Sigmoid colon (tissue), 7 donors: ENCODE measurements at regions of chr4 and their contacts with region 1.

Region 1: DNA sequence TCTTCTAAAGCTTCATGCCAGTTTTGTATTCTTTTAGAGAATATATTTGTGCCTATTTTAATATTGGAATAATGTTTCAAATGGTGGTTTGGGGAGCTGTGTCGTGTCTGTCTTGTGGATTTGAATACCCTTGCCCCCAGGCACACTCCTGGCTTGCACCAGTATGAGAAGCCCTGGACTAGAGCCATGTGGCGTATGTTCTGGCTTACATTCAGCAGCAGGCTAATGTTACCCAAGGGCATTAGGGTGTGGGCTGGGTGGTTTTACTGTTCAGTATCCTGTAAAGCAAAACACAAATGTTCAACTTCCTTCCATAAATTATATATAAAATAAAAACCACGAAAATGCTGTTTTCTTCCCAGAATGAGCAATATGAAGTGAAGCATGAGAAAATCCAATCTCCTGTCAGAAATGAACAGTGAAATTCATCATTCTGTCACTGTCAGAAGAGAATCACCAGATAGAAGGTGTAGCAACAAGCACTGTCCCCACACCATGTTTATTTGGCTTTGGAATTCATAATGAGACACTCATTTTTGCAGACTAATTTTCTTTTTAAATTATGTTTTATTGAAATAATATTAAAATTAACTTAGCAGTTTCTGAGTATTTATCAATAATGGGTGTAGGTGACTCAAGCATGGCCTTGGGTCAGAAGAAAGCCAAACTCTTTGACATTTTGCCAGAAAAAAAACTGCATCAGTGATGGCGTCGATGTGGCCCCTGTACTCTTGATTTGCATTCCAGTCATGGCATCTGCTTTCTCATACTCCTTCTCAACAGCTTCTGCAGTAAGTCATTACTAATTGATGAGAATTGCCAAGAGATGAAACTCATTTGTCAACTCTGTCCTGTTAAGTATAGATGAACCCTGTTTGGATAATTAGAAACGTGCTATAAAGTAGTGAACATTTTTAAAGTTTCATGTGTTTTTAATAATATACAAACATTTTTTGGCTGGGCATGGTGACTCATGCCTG is 43.8 kb downstream of the WWC2 start:
- DNase-seq: peak; percentile 81
- H3K4me3 ChIP-seq: no peak overlapping the region
- H3K27ac ChIP-seq: peak overlapping the region in 2 of 4 donors; percentile 10 to 38
- H3K4me1 ChIP-seq: peaks cover 0 to 78% (median 50%) of the 10 kb centered on the region in 4 donors
- H3K27me3 ChIP-seq: no peaks in the 10 kb centered on the region
- CTCF ChIP-seq: no peak
- EP300 ChIP-seq: no peak
- POLR2A ChIP-seq: no peak

Region 2: GRCh38 chr4:182555997-182556418 is 586.9 kb before region 1 on chr4:
- intact Hi-C with region 1: no loop called
- DNase-seq: no peak
- H3K4me3 ChIP-seq: no peak overlapping the region
- H3K27ac ChIP-seq: peak overlapping the region in 2 of 4 donors; percentile 37 to 68
- H3K4me1 ChIP-seq: peaks cover 0 to 27% (median 17%) of the 10 kb centered on the region in 4 donors
- H3K27me3 ChIP-seq: no peaks in the 10 kb centered on the region
- CTCF ChIP-seq: no peak
- EP300 ChIP-seq: no peak
- POLR2A ChIP-seq: no peak

Region 3: DNA sequence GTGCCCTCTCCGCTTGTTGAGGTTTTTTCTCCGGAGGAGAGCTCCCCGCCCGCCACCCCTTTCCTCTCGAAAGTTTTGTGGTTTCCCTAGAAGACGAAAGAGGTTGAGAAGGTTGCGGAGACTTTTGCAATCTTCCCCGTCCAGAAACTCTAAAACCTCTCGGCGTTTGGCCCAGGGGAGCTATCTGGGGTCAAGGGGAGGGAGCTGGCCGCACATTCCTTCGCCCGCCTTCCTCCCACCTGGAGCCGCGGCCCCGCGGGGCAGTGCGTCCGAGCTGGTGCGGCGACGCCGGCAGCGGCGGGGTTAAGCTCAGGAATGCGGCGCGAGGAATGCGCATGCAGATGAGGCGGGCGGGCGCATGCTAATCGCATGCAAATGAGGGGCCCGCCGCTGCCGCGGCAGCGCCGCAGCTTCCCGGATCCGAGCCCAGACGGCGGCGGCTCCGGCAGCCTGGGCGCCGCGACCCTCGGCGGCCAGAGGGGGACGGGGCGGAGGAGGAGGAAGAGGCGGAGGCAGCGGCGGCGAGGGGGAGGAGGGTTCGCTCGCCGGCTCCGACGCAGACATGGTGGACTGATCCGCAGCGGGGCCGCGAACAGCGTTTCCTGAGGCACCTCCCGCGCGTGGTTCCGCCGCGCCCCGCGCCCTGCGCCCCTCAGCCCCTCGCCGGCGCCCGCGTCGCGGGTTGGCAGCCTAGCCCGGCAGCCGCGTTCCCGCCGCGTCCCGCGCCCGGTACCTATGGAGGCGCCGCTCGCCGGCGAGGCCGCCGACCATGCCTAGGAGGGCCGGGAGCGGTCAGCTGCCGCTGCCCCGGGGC is 43.9 kb before region 1 on chr4 and contains the start of gene WWC2:
- intact Hi-C with region 1: loop called (anchors 5 kb)
- DNase-seq: peak; percentile 94
- H3K4me3 ChIP-seq: peak within 1 kb of the TSS; percentile 71 to 95 (median 76)
- H3K27ac ChIP-seq: peak within 1 kb of the TSS; percentile 89 to 99 (median 97)
- H3K4me1 ChIP-seq: peaks cover 0 to 34% (median 22%) of the 10 kb centered on the region in 4 donors
- H3K27me3 ChIP-seq: no peaks in the 10 kb centered on the region
- CTCF ChIP-seq: no peak
- EP300 ChIP-seq: no peak
- POLR2A ChIP-seq: peak in 1 of 2 donors; percentile 17
- total RNA-seq, gene WWC2: 27.0 to 53.5 (median 35.3) TPM